ENCODE measurements at regions of chr10 and their contacts with region 1.

Region 1: GRCh38 chr10:11581213-11581612 is 30.2 kb downstream of the USP6NL start:
- DNase-seq: no peak
- H3K4me3 ChIP-seq: no peak overlapping the region
- H3K4me3 Mint-ChIP-seq: no peak overlapping the region
- H3K27ac ChIP-seq: no peak overlapping the region
- H3K27ac Mint-ChIP-seq: no peak overlapping the region
- H3K4me1 ChIP-seq: peaks cover 12 to 18% of the 10 kb centered on the region in 2 donors
- H3K4me1 Mint-ChIP-seq: peaks cover 22% of the 10 kb centered on the region
- H3K27me3 ChIP-seq: no peaks in the 10 kb centered on the region
- H3K27me3 Mint-ChIP-seq: peaks cover 1 to 2% (median 2%) of the 10 kb centered on the region in 3 donors
- CTCF ChIP-seq: no peak

Region 2: GRCh38 chr10:11454958-11455566 is 126.2 kb before region 1 on chr10:
- intact Hi-C with region 1: no loop called
- DNase-seq: no peak
- H3K4me3 ChIP-seq: no peak overlapping the region
- H3K4me3 Mint-ChIP-seq: no peak overlapping the region
- H3K27ac ChIP-seq: no peak overlapping the region
- H3K27ac Mint-ChIP-seq: peak overlapping the region in 1 of 7 donors; percentile 21
- H3K4me1 ChIP-seq: no peaks in the 10 kb centered on the region
- H3K4me1 Mint-ChIP-seq: peaks cover 1% of the 10 kb centered on the region
- H3K27me3 ChIP-seq: no peaks in the 10 kb centered on the region
- H3K27me3 Mint-ChIP-seq: peaks cover 0 to 11% (median 2%) of the 10 kb centered on the region in 3 donors
- CTCF ChIP-seq: no peak

Region 3: DNA sequence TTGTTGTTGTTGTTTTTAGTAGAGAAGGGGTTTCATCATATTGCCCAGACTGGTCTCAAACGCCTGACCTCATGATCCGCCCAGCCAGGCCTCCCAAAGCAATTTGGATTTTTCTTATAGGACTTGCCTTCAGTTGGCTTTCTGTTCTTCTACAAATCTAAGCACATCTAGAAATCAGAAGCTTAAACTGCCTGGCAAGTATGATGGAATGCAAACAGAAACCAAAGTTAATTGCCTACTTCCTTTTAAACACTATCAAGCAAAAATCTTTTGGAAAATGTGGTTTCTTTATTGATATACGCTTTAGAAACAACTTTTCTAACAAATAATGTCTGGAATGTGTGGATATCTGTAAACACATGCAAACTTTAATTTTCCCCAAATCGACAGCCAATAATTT is 34.6 kb before region 1 on chr10:
- intact Hi-C with region 1: loop called in 1 of 2 experiments (anchors 5 kb)
- DNase-seq: no peak
- H3K4me3 ChIP-seq: no peak overlapping the region
- H3K4me3 Mint-ChIP-seq: no peak overlapping the region
- H3K27ac ChIP-seq: no peak overlapping the region
- H3K27ac Mint-ChIP-seq: peak overlapping the region in 1 of 7 donors; percentile 62
- H3K4me1 ChIP-seq: peaks cover 13 to 19% of the 10 kb centered on the region in 2 donors
- H3K4me1 Mint-ChIP-seq: peaks cover 26% of the 10 kb centered on the region
- H3K27me3 ChIP-seq: no peaks in the 10 kb centered on the region
- H3K27me3 Mint-ChIP-seq: no peaks in the 10 kb centered on the region
- CTCF ChIP-seq: no peak

Region 4: GRCh38 chr10:11631890-11632587 is 50.8 kb after region 1 on chr10:
- intact Hi-C with region 1: no loop called
- DNase-seq: peak in 2 of 3 donors; percentile 19 to 20
- H3K4me3 ChIP-seq: no peak overlapping the region
- H3K4me3 Mint-ChIP-seq: peak overlapping the region; percentile 48 to 63
- H3K27ac ChIP-seq: no peak overlapping the region
- H3K27ac Mint-ChIP-seq: peak overlapping the region in 2 of 7 donors; percentile 27 to 38
- H3K4me1 ChIP-seq: peaks cover 3 to 10% of the 10 kb centered on the region in 2 donors
- H3K4me1 Mint-ChIP-seq: peaks cover 12% of the 10 kb centered on the region
- H3K27me3 ChIP-seq: no peaks in the 10 kb centered on the region
- H3K27me3 Mint-ChIP-seq: peaks cover 2 to 6% (median 3%) of the 10 kb centered on the region in 3 donors
- CTCF ChIP-seq: no peak

Region 5: GRCh38 chr10:11684717-11685645 is 103.8 kb after region 1 on chr10:
- intact Hi-C with region 1: no loop called
- DNase-seq: peak; percentile 63 to 88 (median 76)
- H3K4me3 ChIP-seq: peak overlapping the region; percentile 41 to 74 (median 44)
- H3K4me3 Mint-ChIP-seq: peak overlapping the region; percentile 90 to 98
- H3K27ac ChIP-seq: peak overlapping the region; percentile 77 to 80
- H3K27ac Mint-ChIP-seq: peak overlapping the region; percentile 90 to 97 (median 97)
- H3K4me1 ChIP-seq: peaks cover 49 to 54% of the 10 kb centered on the region in 2 donors
- H3K4me1 Mint-ChIP-seq: peaks cover 61% of the 10 kb centered on the region
- H3K27me3 ChIP-seq: peaks cover 11 to 21% of the 10 kb centered on the region in 2 donors
- H3K27me3 Mint-ChIP-seq: peaks cover 14 to 38% (median 29%) of the 10 kb centered on the region in 3 donors
- CTCF ChIP-seq: no peak